ENCODE measurements at regions of chr2 and their contacts with region 1.

Region 1: GRCh38 chr2:62195421-62196277 is at the start of gene B3GNT2:
- DNase-seq: peak; percentile 67 to 75 (median 70)
- H3K4me3 ChIP-seq: peak within 1 kb of the TSS; percentile 90 to 98 (median 97)
- H3K4me3 Mint-ChIP-seq: peak within 1 kb of the TSS; percentile 89 to 90
- H3K27ac ChIP-seq: peak within 1 kb of the TSS; percentile 74 to 95
- H3K27ac Mint-ChIP-seq: peak within 1 kb of the TSS; percentile 76 to 94 (median 90)
- H3K4me1 ChIP-seq: peaks cover 51 to 60% of the 10 kb centered on the region in 2 donors
- H3K4me1 Mint-ChIP-seq: peaks cover 51% of the 10 kb centered on the region
- H3K27me3 ChIP-seq: no peaks in the 10 kb centered on the region
- H3K27me3 Mint-ChIP-seq: peaks cover 0 to 3% (median 1%) of the 10 kb centered on the region in 3 donors
- CTCF ChIP-seq: no peak
- polyA plus RNA-seq, gene B3GNT2: 15.9 to 34.7 (median 18.5) TPM

Region 2: GRCh38 chr2:62149708-62150107 is 45.9 kb before region 1 on chr2:
- intact Hi-C with region 1: no loop called
- DNase-seq: peak in 1 of 3 donors; percentile 55
- H3K4me3 ChIP-seq: no peak overlapping the region
- H3K4me3 Mint-ChIP-seq: no peak overlapping the region
- H3K27ac ChIP-seq: no peak overlapping the region
- H3K27ac Mint-ChIP-seq: no peak overlapping the region
- H3K4me1 ChIP-seq: peaks cover 16 to 26% of the 10 kb centered on the region in 2 donors
- H3K4me1 Mint-ChIP-seq: peaks cover 38% of the 10 kb centered on the region
- H3K27me3 ChIP-seq: no peaks in the 10 kb centered on the region
- H3K27me3 Mint-ChIP-seq: no peaks in the 10 kb centered on the region
- CTCF ChIP-seq: no peak

Region 3: GRCh38 chr2:62287899-62288880 is 92.5 kb after region 1 on chr2:
- intact Hi-C with region 1: loop called in 1 of 2 experiments (anchors 5 kb)
- DNase-seq: peak; percentile 84 to 90 (median 86)
- H3K4me3 ChIP-seq: peak overlapping the region in 1 of 3 experiments; percentile 4
- H3K4me3 Mint-ChIP-seq: peak overlapping the region in 1 of 2 donors; percentile 4
- H3K27ac ChIP-seq: peak overlapping the region; percentile 43 to 47
- H3K27ac Mint-ChIP-seq: peak overlapping the region; percentile 48 to 87 (median 81)
- H3K4me1 ChIP-seq: peaks cover 25 to 31% of the 10 kb centered on the region in 2 donors
- H3K4me1 Mint-ChIP-seq: peaks cover 39% of the 10 kb centered on the region
- H3K27me3 ChIP-seq: no peaks in the 10 kb centered on the region
- H3K27me3 Mint-ChIP-seq: peaks cover 0 to 1% (median 0%) of the 10 kb centered on the region in 3 donors
- CTCF ChIP-seq: no peak

Region 4: DNA sequence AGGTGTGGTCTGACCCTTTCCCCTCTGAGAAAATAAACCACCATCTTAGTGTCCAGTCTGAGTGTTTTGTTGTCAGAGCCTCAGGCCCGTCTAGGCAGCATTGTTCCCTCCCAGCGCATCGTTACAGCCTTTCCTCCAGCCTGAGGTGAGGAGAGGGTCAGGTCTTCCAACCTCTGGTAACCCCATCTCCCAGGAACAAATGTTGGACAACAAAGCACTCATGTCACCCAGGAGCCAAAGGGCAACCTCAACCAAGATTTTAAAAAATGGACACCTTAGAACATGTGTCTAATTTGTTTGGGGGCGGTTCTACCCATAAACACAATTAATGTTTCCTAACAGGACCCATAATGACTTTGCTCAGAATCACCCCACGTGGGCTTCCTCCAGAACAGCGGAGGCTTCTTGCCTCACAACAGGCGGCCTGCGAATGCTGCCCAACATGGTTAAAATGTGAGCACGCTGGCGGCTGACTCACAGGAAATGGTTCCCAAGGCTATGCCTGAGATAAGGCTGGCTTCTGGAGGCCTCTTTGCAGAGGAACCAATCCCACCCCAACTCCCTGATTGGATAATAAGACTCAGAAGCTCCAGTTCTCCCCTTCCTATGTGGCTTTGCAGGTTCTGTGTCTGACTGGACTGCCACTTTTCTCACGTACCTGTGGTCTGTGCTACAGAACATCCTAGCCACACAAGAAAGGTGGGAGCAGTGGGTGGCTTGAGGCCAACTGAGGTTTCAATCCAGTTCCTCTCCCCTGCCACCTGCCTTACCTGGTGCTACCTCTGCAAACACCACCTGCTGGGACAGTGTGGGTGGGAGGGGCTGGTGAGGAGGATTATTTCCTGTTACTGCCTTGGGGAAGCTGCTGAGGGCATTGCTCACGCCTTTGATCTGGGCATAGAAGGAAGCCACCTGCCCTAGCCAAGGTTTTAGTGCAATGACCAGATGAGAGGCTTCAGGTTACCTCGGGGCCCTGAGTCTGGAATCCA is 109.1 kb after region 1 on chr2:
- intact Hi-C with region 1: loop called in 1 of 2 experiments (anchors 5 kb)
- DNase-seq: peak; percentile 79 to 92 (median 85)
- H3K4me3 ChIP-seq: peak overlapping the region in 1 of 3 experiments; percentile 53
- H3K4me3 Mint-ChIP-seq: peak overlapping the region; percentile 70 to 87
- H3K27ac ChIP-seq: peak overlapping the region; percentile 89 to 90
- H3K27ac Mint-ChIP-seq: peak overlapping the region; percentile 92 to 100 (median 96)
- H3K4me1 ChIP-seq: peaks cover 54 to 70% of the 10 kb centered on the region in 2 donors
- H3K4me1 Mint-ChIP-seq: peaks cover 67% of the 10 kb centered on the region
- H3K27me3 ChIP-seq: no peaks in the 10 kb centered on the region
- H3K27me3 Mint-ChIP-seq: no peaks in the 10 kb centered on the region
- CTCF ChIP-seq: no peak

Measured in CD14-positive monocyte (primary cell).